CD14-positive monocyte (primary cell): ENCODE measurements at regions of chr11 and their contacts with region 1.

Region 1: DNA sequence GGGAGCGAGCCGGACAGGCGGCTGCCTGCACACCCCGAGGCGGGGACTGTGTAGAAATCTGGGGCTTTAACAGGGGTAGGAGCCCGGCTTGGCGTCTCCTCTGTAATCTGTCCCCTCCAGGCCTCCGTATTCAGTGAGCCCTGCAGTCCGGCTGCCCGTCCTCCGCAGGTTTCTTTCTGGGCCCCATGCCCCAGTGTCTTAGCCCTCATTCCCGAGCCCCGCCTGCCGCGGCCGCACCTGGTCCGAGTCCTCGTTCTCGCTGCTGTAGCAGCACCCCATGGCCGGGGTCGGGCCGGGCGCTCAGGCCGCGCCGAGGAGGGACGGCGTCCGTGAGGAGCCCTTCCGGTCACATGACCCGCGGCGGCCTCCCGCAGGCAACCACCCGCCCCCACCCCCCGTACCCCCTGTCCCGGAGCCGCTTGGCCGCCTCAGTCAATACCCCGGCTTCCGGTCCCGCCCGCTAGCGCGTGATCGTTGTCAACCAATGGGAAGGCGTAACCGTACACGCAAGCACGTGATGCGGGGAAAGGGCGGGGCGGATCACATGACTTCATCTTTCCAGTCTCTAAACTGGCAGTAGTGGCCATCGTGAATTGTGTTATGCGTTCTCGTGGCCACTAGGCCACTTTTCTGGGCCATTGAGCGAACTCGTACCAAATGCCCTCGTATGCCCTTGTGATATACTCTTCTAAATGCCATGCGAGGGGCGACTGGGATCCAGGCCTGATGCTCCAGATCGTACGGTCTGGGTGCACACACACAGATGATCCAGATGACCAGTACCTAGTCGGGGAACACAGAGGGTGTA is at the start of gene LAMTOR1:
- DNase-seq: peak; percentile 99
- H3K4me3 ChIP-seq: peak within 1 kb of the TSS; percentile 81 to 95 (median 81)
- H3K4me3 Mint-ChIP-seq: peak within 1 kb of the TSS; percentile 91 to 99
- H3K27ac ChIP-seq: peak within 1 kb of the TSS; percentile 90 to 95
- H3K27ac Mint-ChIP-seq: peak within 1 kb of the TSS; percentile 95 to 98 (median 96)
- H3K4me1 ChIP-seq: peaks cover 46 to 50% of the 10 kb centered on the region in 2 donors
- H3K4me1 Mint-ChIP-seq: peaks cover 49% of the 10 kb centered on the region
- H3K27me3 ChIP-seq: no peaks in the 10 kb centered on the region
- H3K27me3 Mint-ChIP-seq: peaks cover 0 to 1% (median 0%) of the 10 kb centered on the region in 3 donors
- CTCF ChIP-seq: peak; percentile 70
- polyA plus RNA-seq, gene LAMTOR1: 224 to 292 (median 256) TPM

Region 2: DNA sequence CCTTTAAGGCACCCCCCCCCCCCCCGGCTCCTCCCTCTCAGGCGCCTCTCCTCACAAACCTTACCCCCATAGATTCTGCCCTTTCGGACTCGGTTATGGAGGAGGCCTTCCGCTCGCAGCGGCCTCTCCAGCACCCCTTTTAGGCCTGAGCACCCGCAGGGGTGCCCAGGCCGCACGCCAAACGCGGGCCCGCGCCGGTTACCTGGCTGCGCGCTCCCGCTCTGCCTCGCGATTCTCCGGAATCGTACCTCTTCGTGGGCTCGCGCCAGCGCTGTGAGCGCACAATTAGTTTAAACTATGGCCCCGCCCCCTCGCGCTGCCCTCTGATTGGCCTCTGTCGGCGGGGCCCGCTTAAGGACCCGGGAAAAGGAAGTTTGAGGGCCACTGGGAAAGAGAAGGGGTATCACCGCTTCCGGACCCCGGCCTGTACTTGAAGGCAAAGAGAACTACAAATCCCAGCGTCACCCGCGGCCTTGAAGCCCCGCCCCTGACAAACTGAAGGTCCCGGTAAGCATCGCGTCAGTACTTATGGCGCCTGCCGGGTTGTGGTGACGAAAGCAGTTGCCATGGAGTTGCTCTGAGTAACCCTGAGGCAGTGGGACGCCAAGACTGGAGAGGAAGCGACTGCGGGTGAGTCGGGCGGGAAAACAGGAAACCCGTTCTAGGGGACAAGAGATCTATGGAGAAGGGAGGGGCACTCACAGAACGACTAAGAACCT is 22.7 kb before region 1 on chr11 and contains the starts of genes LRRC51 and NUMA1:
- intact Hi-C with region 1: loop called in 1 of 2 experiments (anchors 2 kb)
- DNase-seq: peak; percentile 100
- H3K4me3 ChIP-seq: peak within 1 kb of the TSS; percentile 69 to 98 (median 72)
- H3K4me3 Mint-ChIP-seq: peak within 1 kb of the TSS; percentile 84 to 98
- H3K27ac ChIP-seq: peak within 1 kb of the TSS; percentile 53 to 82
- H3K27ac Mint-ChIP-seq: peak within 1 kb of the TSS; percentile 96 to 100 (median 98)
- H3K4me1 ChIP-seq: peaks cover 36 to 66% of the 10 kb centered on the region in 2 donors
- H3K4me1 Mint-ChIP-seq: peaks cover 48% of the 10 kb centered on the region
- H3K27me3 ChIP-seq: no peaks in the 10 kb centered on the region
- H3K27me3 Mint-ChIP-seq: no peaks in the 10 kb centered on the region
- CTCF ChIP-seq: no peak
- polyA plus RNA-seq, gene LRRC51: 1.3 to 1.9 (median 1.6) TPM
- polyA plus RNA-seq, gene NUMA1: 4.1 to 91.2 (median 12.4) TPM

Region 3: GRCh38 chr11:72141066-72141465 is 37.9 kb after region 1 on chr11:
- intact Hi-C with region 1: loop called in 1 of 2 experiments (anchors 5 kb)
- DNase-seq: no peak
- H3K4me3 ChIP-seq: no peak overlapping the region
- H3K4me3 Mint-ChIP-seq: no peak overlapping the region
- H3K27ac ChIP-seq: peak overlapping the region in 1 of 2 donors; percentile 55
- H3K27ac Mint-ChIP-seq: peak overlapping the region; percentile 23 to 85 (median 70)
- H3K4me1 ChIP-seq: peaks cover 71 to 76% of the 10 kb centered on the region in 2 donors
- H3K4me1 Mint-ChIP-seq: peaks cover 69% of the 10 kb centered on the region
- H3K27me3 ChIP-seq: no peaks in the 10 kb centered on the region
- H3K27me3 Mint-ChIP-seq: peaks cover 0 to 2% (median 0%) of the 10 kb centered on the region in 3 donors
- CTCF ChIP-seq: no peak

Region 4: GRCh38 chr11:72203163-72203562 is 100.0 kb after region 1 on chr11:
- intact Hi-C with region 1: no loop called
- DNase-seq: no peak
- H3K4me3 ChIP-seq: no peak overlapping the region
- H3K4me3 Mint-ChIP-seq: no peak overlapping the region
- H3K27ac ChIP-seq: no peak overlapping the region
- H3K27ac Mint-ChIP-seq: peak overlapping the region in 1 of 7 donors; percentile 69
- H3K4me1 ChIP-seq: peaks cover 47 to 50% of the 10 kb centered on the region in 2 donors
- H3K4me1 Mint-ChIP-seq: peaks cover 47% of the 10 kb centered on the region
- H3K27me3 ChIP-seq: no peaks in the 10 kb centered on the region
- H3K27me3 Mint-ChIP-seq: peaks cover 0 to 2% (median 0%) of the 10 kb centered on the region in 3 donors
- CTCF ChIP-seq: no peak